Activated CD8-positive, alpha-beta T cell treated with anti-CD3 and anti-CD28 coated beads for 36 hours (primary cell): ENCODE measurements at regions of chr10 and their contacts with region 1.

Region 1: DNA sequence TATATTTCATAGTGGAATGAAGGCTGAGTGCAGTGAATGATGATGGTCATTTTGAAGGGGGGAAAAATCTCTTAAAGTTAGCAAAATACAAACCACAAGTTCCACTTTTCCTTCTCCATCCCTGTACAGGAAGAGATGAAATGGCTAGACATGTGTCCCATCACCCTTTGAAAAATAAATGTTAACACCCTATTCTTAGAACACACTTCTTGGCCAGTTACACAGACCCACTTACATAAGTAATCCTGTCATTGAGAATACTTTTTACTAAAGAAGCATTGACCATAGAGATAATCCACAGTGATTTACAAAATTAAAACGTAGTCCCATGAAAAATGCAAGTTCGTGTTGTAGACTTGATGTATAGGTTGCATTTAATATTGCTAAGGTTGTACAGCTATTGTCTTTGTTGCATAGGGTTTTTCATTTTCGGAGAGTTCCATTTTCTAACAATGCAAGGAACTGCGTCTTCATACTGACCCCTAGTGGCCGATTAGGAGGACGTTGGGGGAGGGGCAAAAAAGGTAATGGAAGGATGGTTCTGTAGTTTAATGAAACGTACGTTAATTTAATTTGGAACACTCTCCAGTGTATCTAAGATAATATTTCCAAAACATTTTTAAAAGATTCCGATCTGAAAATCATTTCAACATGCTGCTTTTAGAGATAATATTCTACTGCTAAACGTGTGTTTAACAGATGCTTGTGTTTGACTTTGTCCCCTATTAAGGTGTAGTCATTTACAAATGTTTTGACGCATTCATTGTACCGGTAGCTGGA is 60.9 kb downstream of the ARMC3 start:
- DNase-seq: peak; percentile 79
- ATAC-seq: peak; percentile 80
- H3K4me3 Mint-ChIP-seq: no peak overlapping the region
- H3K27ac Mint-ChIP-seq: no peak overlapping the region
- H3K4me1 Mint-ChIP-seq: peaks cover 18% of the 10 kb centered on the region
- H3K27me3 Mint-ChIP-seq: no peaks in the 10 kb centered on the region
- CTCF ChIP-seq: peak; percentile 94

Region 2: GRCh38 chr10:22003079-22003913 is 985.5 kb before region 1 on chr10 and contains the start of gene DNAJC1:
- CTCF ChIA-PET with region 1: interaction called, 19 read pairs
- POLR2A ChIA-PET with region 1: no interaction called
- intact Hi-C with region 1: loop called (anchors 5 kb)
- DNase-seq: peak; percentile 99
- ATAC-seq: peak; percentile 93
- H3K4me3 Mint-ChIP-seq: peak within 1 kb of the TSS; percentile 89
- H3K27ac Mint-ChIP-seq: peak within 1 kb of the TSS; percentile 92
- H3K4me1 Mint-ChIP-seq: peaks cover 27% of the 10 kb centered on the region
- H3K27me3 Mint-ChIP-seq: peaks cover 4% of the 10 kb centered on the region
- CTCF ChIP-seq: no peak
- total RNA-seq, gene DNAJC1: 19.3 to 23.7 TPM

Region 3: DNA sequence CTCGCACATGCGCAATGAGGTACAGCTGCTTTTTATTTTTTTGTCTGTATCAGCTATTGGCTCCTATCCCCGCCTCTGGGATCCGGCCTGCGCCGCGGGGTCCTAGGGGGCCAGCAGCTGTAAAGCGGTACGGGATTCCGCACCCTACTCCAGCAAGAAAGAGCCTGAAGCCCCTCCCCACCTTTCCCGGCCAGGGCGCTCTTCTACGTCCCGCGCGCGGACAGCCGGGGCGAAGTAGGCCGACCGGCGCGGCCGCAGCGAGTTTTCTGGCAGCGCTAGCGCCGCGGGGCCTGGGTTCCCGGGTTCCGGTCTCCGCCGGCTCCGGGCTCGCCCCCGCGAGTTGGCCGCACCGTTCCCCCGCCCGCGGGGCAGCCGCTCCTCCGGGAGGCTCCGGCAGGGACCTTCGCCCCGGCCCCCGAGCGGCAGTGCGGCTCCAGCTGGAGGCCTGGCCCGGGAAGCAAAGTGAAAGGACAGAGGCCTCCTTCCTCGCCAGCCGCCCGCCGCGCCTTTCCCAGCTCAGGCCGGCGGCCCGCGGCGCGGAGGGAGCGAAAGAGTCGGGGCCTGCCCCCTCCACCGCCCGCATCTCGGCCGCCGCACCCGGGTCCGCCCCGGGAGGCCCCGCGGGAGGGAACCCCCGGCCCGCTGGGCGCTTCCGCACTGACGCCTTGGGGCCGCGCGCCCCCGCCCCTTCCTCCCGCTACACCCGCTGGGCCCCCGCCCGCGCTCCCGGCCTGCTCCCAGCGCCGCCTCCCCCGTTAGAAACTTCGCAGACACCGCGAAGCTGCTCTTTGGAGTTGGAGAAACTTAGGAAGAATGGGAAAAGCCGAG is 648.2 kb before region 1 on chr10:
- CTCF ChIA-PET with region 1: no interaction called
- POLR2A ChIA-PET with region 1: interaction called, 3 read pairs
- intact Hi-C with region 1: loop called (anchors 10 kb)
- DNase-seq: peak; percentile 65
- ATAC-seq: peak; percentile 55
- H3K4me3 Mint-ChIP-seq: peak overlapping the region; percentile 76
- H3K27ac Mint-ChIP-seq: peak overlapping the region; percentile 79
- H3K4me1 Mint-ChIP-seq: peaks cover 26% of the 10 kb centered on the region
- H3K27me3 Mint-ChIP-seq: peaks cover 66% of the 10 kb centered on the region
- CTCF ChIP-seq: no peak

Region 4: GRCh38 chr10:22550732-22551131 is 438.0 kb before region 1 on chr10:
- CTCF ChIA-PET with region 1: interaction called, 9 read pairs
- POLR2A ChIA-PET with region 1: no interaction called
- intact Hi-C with region 1: loop called (anchors 2 kb)
- DNase-seq: peak; percentile 85
- ATAC-seq: no peak
- H3K4me3 Mint-ChIP-seq: no peak overlapping the region
- H3K27ac Mint-ChIP-seq: peak overlapping the region; percentile 63
- H3K4me1 Mint-ChIP-seq: peaks cover 29% of the 10 kb centered on the region
- H3K27me3 Mint-ChIP-seq: no peaks in the 10 kb centered on the region
- CTCF ChIP-seq: peak; percentile 81

Region 5: GRCh38 chr10:22583689-22584088 is 405.1 kb before region 1 on chr10:
- CTCF ChIA-PET with region 1: interaction called, 10 read pairs
- POLR2A ChIA-PET with region 1: no interaction called
- intact Hi-C with region 1: no loop called
- DNase-seq: no peak
- ATAC-seq: no peak
- H3K4me3 Mint-ChIP-seq: no peak overlapping the region
- H3K27ac Mint-ChIP-seq: peak overlapping the region; percentile 34
- H3K4me1 Mint-ChIP-seq: peaks cover 36% of the 10 kb centered on the region
- H3K27me3 Mint-ChIP-seq: no peaks in the 10 kb centered on the region
- CTCF ChIP-seq: no peak

Region 6: GRCh38 chr10:22714479-22715289 is 274.1 kb before region 1 on chr10 and contains the start of gene PIP4K2A:
- CTCF ChIA-PET with region 1: interaction called, 4 read pairs
- POLR2A ChIA-PET with region 1: no interaction called
- intact Hi-C with region 1: loop called (anchors 10 kb)
- DNase-seq: peak; percentile 75
- ATAC-seq: peak; percentile 82
- H3K4me3 Mint-ChIP-seq: peak within 1 kb of the TSS; percentile 92
- H3K27ac Mint-ChIP-seq: peak within 1 kb of the TSS; percentile 90
- H3K4me1 Mint-ChIP-seq: peaks cover 23% of the 10 kb centered on the region
- H3K27me3 Mint-ChIP-seq: no peaks in the 10 kb centered on the region
- CTCF ChIP-seq: no peak
- total RNA-seq, gene PIP4K2A: 108 to 115 TPM

Region 7: DNA sequence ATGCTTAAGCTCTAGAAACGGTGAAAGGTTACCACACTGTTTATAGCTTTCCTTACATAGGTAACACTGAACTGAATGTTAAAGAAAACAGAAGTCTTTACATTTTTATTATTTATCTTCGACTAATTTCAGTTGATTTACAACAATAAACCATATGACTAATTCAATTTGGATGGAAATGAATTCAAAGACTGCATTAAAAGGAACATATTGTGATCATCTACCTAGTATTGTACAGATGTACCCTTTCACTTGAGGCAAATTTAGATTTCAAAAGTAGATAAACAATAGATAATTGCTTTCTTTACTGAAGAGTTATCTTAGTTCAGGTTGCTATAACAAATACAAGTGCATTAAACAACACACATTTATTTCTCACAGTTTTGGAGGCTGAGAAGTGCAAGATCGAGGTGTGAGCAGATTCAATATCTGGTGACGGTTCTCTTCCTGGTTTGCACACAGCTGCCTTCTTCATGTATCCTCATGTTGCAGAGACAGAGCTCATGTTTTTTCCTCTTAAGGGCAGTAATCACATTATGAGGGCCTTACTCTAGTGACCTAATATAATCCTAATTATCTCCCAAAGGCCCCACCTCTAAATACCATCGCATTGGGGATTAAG is 75.9 kb before region 1 on chr10:
- CTCF ChIA-PET with region 1: no interaction called
- POLR2A ChIA-PET with region 1: no interaction called
- intact Hi-C with region 1: no loop called
- DNase-seq: no peak
- ATAC-seq: no peak
- H3K4me3 Mint-ChIP-seq: no peak overlapping the region
- H3K27ac Mint-ChIP-seq: no peak overlapping the region
- H3K4me1 Mint-ChIP-seq: peaks cover 13% of the 10 kb centered on the region
- H3K27me3 Mint-ChIP-seq: no peaks in the 10 kb centered on the region
- CTCF ChIP-seq: no peak

Region 8: GRCh38 chr10:23053036-23053435 is 64.3 kb after region 1 on chr10:
- CTCF ChIA-PET with region 1: no interaction called
- POLR2A ChIA-PET with region 1: no interaction called
- intact Hi-C with region 1: no loop called
- DNase-seq: no peak
- ATAC-seq: no peak
- H3K4me3 Mint-ChIP-seq: no peak overlapping the region
- H3K27ac Mint-ChIP-seq: no peak overlapping the region
- H3K4me1 Mint-ChIP-seq: no peaks in the 10 kb centered on the region
- H3K27me3 Mint-ChIP-seq: peaks cover 24% of the 10 kb centered on the region
- CTCF ChIP-seq: no peak

Region 9: DNA sequence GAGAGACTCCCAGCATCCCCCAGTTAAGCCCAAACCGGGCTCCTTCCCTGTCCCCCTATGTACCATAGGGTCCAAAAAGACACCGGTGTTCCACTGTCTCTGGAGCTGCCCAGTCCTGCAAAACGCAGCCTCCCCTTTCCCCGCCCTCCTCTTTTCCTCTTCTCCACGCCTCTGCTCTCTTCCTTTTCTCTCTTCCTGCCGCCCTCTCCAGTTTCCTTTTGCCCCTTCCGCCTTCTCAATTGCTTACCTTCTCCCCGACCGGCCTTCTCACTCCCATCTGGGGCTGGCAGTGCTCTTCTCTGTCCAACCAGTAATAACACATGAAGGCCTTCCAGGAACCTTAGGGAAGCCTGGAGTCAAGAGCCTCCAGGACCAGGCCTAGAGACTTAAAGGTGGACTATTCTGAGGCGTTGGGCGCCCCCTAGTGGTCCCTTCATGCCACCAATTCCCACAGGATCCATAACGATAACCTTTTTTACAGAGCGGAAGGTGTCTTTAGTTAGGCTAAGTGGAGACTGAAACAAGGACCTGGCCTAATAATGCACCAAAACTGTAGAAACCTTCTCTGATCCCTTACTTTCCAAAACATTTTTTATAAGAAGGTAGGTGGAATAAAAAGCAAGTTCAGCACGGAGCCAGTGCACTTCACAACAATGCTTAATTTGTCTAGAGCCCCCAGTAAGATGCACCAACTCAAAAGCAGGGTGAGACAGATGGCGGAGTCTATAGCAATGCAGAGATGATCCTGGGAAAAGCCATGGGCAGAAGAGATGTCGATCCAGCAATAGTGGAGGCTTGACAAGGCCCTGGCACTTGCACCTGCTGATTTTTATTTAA is 79.4 kb after region 1 on chr10:
- CTCF ChIA-PET with region 1: no interaction called
- POLR2A ChIA-PET with region 1: no interaction called
- intact Hi-C with region 1: loop called (anchors 5 kb)
- DNase-seq: peak; percentile 85
- ATAC-seq: peak; percentile 75
- H3K4me3 Mint-ChIP-seq: no peak overlapping the region
- H3K27ac Mint-ChIP-seq: no peak overlapping the region
- H3K4me1 Mint-ChIP-seq: peaks cover 2% of the 10 kb centered on the region
- H3K27me3 Mint-ChIP-seq: peaks cover 6% of the 10 kb centered on the region
- CTCF ChIP-seq: peak; percentile 82